ENCODE measurements at regions of chr14 and their contacts with region 1.

Region 1: DNA sequence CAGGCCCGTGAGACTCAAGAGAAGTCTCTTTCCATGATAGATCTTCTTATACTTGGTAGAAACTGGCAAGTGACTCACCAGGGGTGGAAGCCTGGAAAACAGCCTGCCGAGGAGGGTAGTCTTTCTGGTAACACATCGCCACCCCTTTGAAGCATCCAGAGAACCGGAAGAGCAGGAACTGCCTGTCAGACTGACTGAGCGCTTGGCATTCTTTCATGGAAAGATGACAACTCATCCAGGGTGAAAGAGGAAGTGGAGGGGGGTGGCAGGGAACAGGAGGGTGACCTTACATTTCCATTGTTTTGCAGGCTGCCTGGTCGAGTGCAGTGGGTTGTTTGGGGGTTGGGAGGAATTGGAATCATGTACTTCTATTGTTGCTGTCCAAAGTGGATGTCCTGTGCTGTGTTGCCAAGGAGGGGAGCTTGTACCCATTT is 34.5 kb downstream of the PRKCH start:
- DNase-seq: peak; percentile 94 to 100
- H3K4me3 ChIP-seq: peak overlapping the region; percentile 48; the same call in 1 of the 2 replicates
- H3K27ac ChIP-seq: peak overlapping the region; percentile 95
- H3K4me1 ChIP-seq: peaks cover 65% of the 10 kb centered on the region
- H3K27me3 ChIP-seq: no peaks in the 10 kb centered on the region
- CTCF ChIP-seq: no peak

Region 2: DNA sequence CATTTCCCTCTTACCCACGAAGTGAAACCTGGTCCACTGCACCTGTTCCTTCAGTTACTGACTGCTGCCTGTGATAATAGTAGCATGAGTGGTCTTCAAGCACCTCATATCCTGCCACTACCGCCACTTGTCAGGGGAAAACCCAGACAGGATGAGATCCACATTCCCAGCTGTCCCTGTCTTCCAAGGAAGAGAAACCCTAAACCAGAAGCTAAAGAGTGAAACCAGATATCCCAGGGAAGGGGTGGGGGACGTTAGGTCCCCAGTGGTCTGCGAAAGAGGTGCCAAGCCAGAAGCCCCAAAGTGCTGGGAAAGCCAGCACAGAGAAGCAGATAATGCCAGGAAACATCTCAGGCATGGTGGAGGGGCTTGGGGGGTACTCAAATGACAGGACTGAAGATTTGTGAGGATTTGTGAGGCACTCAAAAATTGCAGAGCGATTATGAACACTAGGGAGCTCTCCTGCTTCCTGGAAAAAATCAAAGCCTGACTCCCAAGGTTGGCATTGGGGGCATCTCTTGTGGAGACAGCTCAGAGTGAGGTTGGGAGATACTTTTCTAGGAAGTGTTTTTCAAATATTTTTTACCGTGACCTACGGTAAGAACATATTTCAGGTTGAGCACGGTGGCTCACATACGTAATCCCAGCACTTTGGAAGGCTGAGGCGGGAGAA is 152.7 kb before region 1 on chr14:
- CTCF ChIA-PET with region 1: no interaction called
- POLR2A ChIA-PET with region 1: no interaction called
- intact Hi-C with region 1: no loop called
- DNase-seq: no peak
- H3K4me3 ChIP-seq: no peak overlapping the region
- H3K27ac ChIP-seq: no peak overlapping the region
- H3K4me1 ChIP-seq: no peaks in the 10 kb centered on the region
- H3K27me3 ChIP-seq: no peaks in the 10 kb centered on the region
- CTCF ChIP-seq: no peak

Region 3: GRCh38 chr14:61342486-61342885 is 13.4 kb before region 1 on chr14:
- CTCF ChIA-PET with region 1: no interaction called
- POLR2A ChIA-PET with region 1: no interaction called
- intact Hi-C with region 1: no loop called
- DNase-seq: no peak
- H3K4me3 ChIP-seq: no peak overlapping the region
- H3K27ac ChIP-seq: no peak overlapping the region
- H3K4me1 ChIP-seq: peaks cover 30% of the 10 kb centered on the region
- H3K27me3 ChIP-seq: no peaks in the 10 kb centered on the region
- CTCF ChIP-seq: no peak

Region 4: DNA sequence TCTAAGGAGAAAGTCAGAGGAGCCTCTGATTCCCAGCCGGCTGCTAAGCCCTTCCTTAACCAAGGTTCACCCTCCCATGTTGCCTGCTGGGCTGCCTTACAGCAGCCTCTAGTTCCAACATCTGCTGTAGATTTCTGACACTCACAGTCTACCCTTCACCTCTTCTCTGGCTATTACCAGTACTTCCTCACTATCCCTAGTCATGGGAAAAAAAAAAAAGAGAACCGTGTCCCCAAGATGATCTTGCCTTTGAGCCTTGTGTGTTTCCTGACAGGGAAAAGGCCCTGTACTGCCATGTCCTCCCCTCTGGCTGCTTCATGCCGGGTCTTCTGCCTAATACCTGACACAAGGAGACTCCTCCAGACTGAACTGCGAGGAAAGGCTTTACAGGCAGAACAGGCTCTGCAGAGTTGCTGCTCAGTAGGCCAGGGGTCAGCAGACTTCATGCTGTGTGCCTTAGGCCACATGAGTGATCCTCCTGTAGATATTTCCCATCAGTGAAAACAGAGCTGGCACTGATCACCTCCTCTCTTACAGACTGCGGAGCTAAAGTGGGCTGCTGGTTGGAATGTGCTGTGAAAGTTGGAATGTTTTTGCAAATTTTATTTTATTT is 12.3 kb after region 1 on chr14:
- CTCF ChIA-PET with region 1: no interaction called
- POLR2A ChIA-PET with region 1: interaction called, 4 read pairs
- intact Hi-C with region 1: loop called (anchors 1 kb)
- DNase-seq: peak; percentile 74 to 96
- H3K4me3 ChIP-seq: peak overlapping the region; percentile 51
- H3K27ac ChIP-seq: peak overlapping the region; percentile 97
- H3K4me1 ChIP-seq: peaks cover 64% of the 10 kb centered on the region
- H3K27me3 ChIP-seq: no peaks in the 10 kb centered on the region
- CTCF ChIP-seq: no peak

Region 5: GRCh38 chr14:61381547-61381946 is 25.6 kb after region 1 on chr14:
- CTCF ChIA-PET with region 1: no interaction called
- POLR2A ChIA-PET with region 1: no interaction called
- intact Hi-C with region 1: loop called (anchors 1 kb)
- DNase-seq: peak; percentile 61 to 73
- H3K4me3 ChIP-seq: no peak overlapping the region
- H3K27ac ChIP-seq: peak overlapping the region; percentile 36
- H3K4me1 ChIP-seq: peaks cover 54% of the 10 kb centered on the region
- H3K27me3 ChIP-seq: no peaks in the 10 kb centered on the region
- CTCF ChIP-seq: no peak

Region 6: GRCh38 chr14:61388173-61388975 is 32.5 kb after region 1 on chr14:
- CTCF ChIA-PET with region 1: no interaction called
- POLR2A ChIA-PET with region 1: no interaction called
- intact Hi-C with region 1: loop called (anchors 1 kb)
- DNase-seq: peak; percentile 73 to 98
- H3K4me3 ChIP-seq: peak overlapping the region; percentile 36; the same call in 1 of the 2 replicates
- H3K27ac ChIP-seq: peak overlapping the region; percentile 97
- H3K4me1 ChIP-seq: peaks cover 69% of the 10 kb centered on the region
- H3K27me3 ChIP-seq: no peaks in the 10 kb centered on the region
- CTCF ChIP-seq: no peak

Measured in PC-9 (cell line).